GM12878 (cell line): ENCODE measurements at regions of chr20 and their contacts with region 1.

Region 1: DNA sequence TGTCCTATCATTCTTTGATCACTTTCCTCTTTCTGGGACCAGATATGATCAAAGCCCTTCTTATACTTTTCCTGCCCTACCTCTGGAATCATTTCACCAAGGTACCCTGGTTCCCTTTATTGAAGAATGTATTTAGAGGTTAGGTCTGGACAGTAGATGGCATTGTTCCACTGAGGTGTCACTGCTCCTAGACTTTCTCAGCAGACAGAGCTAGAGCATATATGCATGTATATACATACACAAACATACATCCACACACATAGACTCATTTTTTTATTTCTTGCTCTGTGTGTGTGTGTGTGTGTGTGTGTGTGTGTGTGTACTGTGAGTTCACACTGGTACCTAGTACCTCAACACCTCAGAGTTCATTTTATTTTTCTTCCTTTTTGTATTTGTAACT is 40.9 kb downstream of the PTPRA start:
- DNase-seq: no peak
- ATAC-seq: peak; percentile 47; the same call in 1 of the 3 replicates
- H3K4me3 ChIP-seq: no peak overlapping the region
- H3K27ac ChIP-seq: no peak overlapping the region
- H3K4me1 ChIP-seq: no peaks in the 10 kb centered on the region
- H3K27me3 ChIP-seq: no peaks in the 10 kb centered on the region
- CTCF ChIP-seq: peak; percentile 22 to 58 (median 30); a peak in 4 of 6 replicates
- EP300 ChIP-seq: no peak
- POLR2A ChIP-seq: no peak
- RAD21 ChIP-seq: peak; percentile 55

Region 2: DNA sequence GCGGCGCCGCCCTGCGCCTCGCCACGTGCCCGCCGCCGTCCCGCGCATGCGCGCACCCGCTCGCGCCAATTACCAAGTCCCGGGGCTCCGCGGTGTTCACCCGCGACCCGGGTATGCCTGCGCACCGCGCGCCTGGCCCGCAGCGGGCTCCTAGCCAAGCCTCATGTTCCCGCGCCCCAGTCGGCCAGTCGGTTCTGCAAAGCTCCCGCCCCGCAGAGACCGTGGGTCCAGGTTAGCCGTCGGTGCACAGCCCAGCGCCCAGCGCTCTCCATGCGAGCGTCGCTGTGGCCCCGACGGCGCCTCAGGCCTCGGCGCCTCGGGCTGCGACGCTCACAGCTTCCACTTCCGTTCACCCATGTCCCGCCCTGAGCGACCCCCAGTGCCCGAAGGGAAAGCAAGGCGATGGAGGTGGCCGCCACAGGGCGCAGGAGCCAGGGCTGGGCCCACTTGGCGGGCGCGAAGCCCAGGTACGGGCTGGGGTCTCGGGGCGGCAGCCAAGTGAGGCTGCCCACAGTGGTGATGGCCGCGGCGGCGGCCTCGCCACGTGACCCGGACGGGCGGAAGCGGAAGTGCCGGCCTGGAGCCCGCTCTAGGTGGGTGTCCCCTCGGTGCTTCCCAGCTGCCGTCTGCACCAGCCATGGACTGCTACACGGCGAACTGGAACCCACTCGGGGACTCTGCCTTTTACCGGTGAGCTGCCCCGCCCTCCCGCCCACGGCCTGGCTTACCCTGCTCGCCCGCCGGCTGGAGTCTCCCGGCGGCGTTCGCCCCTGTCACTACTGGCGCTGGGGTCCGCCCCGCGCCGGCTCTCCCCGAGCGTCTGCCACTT is 73.8 kb before region 1 on chr20 and contains the starts of genes PCED1A and VPS16:
- CTCF ChIA-PET with region 1: no interaction called
- POLR2A ChIA-PET with region 1: no interaction called
- RAD21 ChIA-PET with region 1: no interaction called
- SMC1A ChIA-PET with region 1: interaction called, 3 read pairs
- in situ Hi-C with region 1: no loop called
- intact Hi-C with region 1: loop called (anchors 5 kb)
- DNase-seq: peak; percentile 43
- ATAC-seq: peak; percentile 97
- H3K4me3 ChIP-seq: peak within 1 kb of the TSS; percentile 99
- H3K27ac ChIP-seq: peak within 1 kb of the TSS; percentile 91
- H3K4me1 ChIP-seq: peaks cover 14% of the 10 kb centered on the region
- H3K27me3 ChIP-seq: no peaks in the 10 kb centered on the region
- CTCF ChIP-seq: no peak
- EP300 ChIP-seq: no peak
- POLR2A ChIP-seq: peak; percentile 92
- RAD21 ChIP-seq: no peak
- polyA plus RNA-seq, gene PCED1A: 4.5 to 12.7 TPM
- polyA plus RNA-seq, gene VPS16: 8.4 to 19.4 TPM

Region 3: GRCh38 chr20:2859330-2860121 is 54.6 kb before region 1 on chr20:
- CTCF ChIA-PET with region 1: no interaction called
- POLR2A ChIA-PET with region 1: no interaction called
- RAD21 ChIA-PET with region 1: no interaction called
- SMC1A ChIA-PET with region 1: no interaction called
- in situ Hi-C with region 1: no loop called
- intact Hi-C with region 1: no loop called
- DNase-seq: no peak
- ATAC-seq: no peak
- H3K4me3 ChIP-seq: no peak overlapping the region
- H3K27ac ChIP-seq: no peak overlapping the region
- H3K4me1 ChIP-seq: no peaks in the 10 kb centered on the region
- H3K27me3 ChIP-seq: no peaks in the 10 kb centered on the region
- CTCF ChIP-seq: no peak
- EP300 ChIP-seq: no peak
- POLR2A ChIP-seq: no peak
- RAD21 ChIP-seq: no peak

Region 4: GRCh38 chr20:3165406-3166337 is 251.5 kb after region 1 on chr20:
- CTCF ChIA-PET with region 1: no interaction called
- POLR2A ChIA-PET with region 1: no interaction called
- RAD21 ChIA-PET with region 1: no interaction called
- SMC1A ChIA-PET with region 1: no interaction called
- in situ Hi-C with region 1: no loop called
- intact Hi-C with region 1: no loop called
- DNase-seq: no peak
- ATAC-seq: no peak
- H3K4me3 ChIP-seq: no peak overlapping the region
- H3K27ac ChIP-seq: no peak overlapping the region
- H3K4me1 ChIP-seq: no peaks in the 10 kb centered on the region
- H3K27me3 ChIP-seq: peaks cover 1 to 3% of the 10 kb centered on the region in 2 experiments; a peak in 3 of 4 replicates
- CTCF ChIP-seq: no peak
- EP300 ChIP-seq: no peak
- POLR2A ChIP-seq: no peak; the same call in 1 of the 2 replicates
- RAD21 ChIP-seq: no peak